ENCODE measurements at regions of chr18 and their contacts with region 1.

Region 1: GRCh38 chr18:23812546-23813440 is 123.5 kb downstream of the LAMA3 start:
- DNase-seq: no peak
- H3K4me3 Mint-ChIP-seq: no peak overlapping the region
- H3K27ac Mint-ChIP-seq: no peak overlapping the region
- H3K4me1 Mint-ChIP-seq: peaks cover 8% of the 10 kb centered on the region
- H3K27me3 Mint-ChIP-seq: no peaks in the 10 kb centered on the region
- CTCF ChIP-seq: peak; percentile 20

Region 2: GRCh38 chr18:23220355-23220754 is 592.4 kb before region 1 on chr18:
- CTCF ChIA-PET with region 1: no interaction called
- intact Hi-C with region 1: no loop called
- DNase-seq: no peak
- H3K4me3 Mint-ChIP-seq: no peak overlapping the region
- H3K27ac Mint-ChIP-seq: no peak overlapping the region
- H3K4me1 Mint-ChIP-seq: peaks cover 4% of the 10 kb centered on the region
- H3K27me3 Mint-ChIP-seq: no peaks in the 10 kb centered on the region
- CTCF ChIP-seq: no peak

Region 3: DNA sequence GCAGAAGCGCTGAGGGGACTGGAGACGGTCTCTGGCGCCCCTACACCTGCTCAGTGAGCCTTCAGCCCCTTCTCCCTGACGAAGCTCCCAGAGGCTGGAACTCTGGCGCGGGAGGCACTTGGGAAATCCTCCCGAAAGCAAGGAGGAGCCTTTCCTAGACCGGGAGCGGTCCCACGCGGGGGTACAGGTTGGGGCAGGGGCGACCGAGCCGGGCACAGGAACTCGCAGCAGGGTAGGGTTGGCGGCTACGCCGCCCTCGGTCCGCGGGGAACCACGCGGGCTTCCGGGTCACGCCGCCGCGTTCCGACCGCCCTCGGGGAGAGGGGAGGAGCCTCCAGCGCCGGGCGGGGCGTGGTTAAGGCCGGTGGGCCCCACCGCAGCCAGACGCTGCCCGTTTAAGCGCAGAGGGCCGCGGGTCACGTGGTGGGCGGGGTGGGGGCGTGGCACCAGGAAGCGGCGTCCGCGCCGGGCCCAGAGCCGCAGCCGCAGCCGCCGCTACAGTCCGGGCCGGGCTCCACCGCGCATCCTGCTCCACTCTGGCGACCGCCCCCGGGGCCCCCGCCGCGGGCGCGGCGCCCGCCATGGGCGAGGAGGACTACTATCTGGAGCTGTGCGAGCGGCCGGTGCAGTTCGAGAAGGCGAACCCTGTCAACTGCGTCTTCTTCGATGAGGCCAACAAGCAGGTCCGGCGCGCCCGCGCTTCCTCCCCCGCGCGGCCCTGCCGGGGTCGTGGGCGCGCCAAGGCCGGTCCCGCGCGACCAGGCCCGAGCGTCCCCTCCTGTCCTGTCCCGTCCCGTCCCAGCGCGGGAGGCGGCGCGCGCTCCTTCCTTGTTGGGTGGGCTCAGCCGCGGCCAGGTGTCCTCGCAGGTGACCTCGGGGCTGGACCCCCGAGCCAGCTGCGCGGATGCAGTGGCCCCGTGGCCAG is 309.5 kb before region 1 on chr18 and contains the start of gene RMC1:
- CTCF ChIA-PET with region 1: no interaction called
- intact Hi-C with region 1: loop called (anchors 5 kb)
- DNase-seq: peak; percentile 98
- H3K4me3 Mint-ChIP-seq: peak within 1 kb of the TSS; percentile 96
- H3K27ac Mint-ChIP-seq: peak within 1 kb of the TSS; percentile 87
- H3K4me1 Mint-ChIP-seq: peaks cover 17% of the 10 kb centered on the region
- H3K27me3 Mint-ChIP-seq: no peaks in the 10 kb centered on the region
- CTCF ChIP-seq: no peak
- total RNA-seq, gene RMC1: 31.0 and 33.7 TPM in 2 replicates

Region 4: GRCh38 chr18:23515911-23516546 is 296.8 kb before region 1 on chr18:
- CTCF ChIA-PET with region 1: no interaction called
- intact Hi-C with region 1: loop called (anchors 1 kb)
- DNase-seq: peak; percentile 79
- H3K4me3 Mint-ChIP-seq: no peak overlapping the region
- H3K27ac Mint-ChIP-seq: no peak overlapping the region
- H3K4me1 Mint-ChIP-seq: peaks cover 8% of the 10 kb centered on the region
- H3K27me3 Mint-ChIP-seq: no peaks in the 10 kb centered on the region
- CTCF ChIP-seq: peak; percentile 88

Region 5: DNA sequence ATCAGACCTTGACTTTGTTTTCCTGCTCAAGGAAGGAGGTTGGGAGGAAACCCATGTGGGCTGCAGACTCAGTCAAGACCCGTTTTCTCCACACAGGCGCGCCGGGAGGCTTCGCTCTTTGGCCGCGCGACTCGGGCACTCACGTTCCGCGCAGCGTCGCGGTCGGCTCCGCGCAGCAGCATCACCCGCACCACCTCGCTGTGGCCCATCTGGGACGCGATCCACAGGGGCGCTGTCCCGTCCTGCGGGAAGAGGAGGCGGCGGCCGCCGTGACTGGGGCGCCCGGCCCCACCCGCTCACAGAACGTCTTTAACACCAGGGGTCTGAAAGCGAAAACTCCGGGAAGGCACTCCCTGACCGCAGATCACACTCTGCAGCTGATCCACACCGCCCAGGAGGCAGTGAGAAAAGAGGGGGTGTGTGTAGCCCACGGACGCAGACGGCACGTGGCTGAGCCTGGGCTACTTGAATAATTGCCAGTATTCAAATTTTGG is 193.4 kb before region 1 on chr18:
- CTCF ChIA-PET with region 1: no interaction called
- intact Hi-C with region 1: loop called (anchors 1 kb)
- DNase-seq: no peak
- H3K4me3 Mint-ChIP-seq: peak overlapping the region; percentile 61
- H3K27ac Mint-ChIP-seq: peak overlapping the region; percentile 2
- H3K4me1 Mint-ChIP-seq: peaks cover 49% of the 10 kb centered on the region
- H3K27me3 Mint-ChIP-seq: no peaks in the 10 kb centered on the region
- CTCF ChIP-seq: no peak

Measured in Calu3 (cell line).